WTC11 (cell line): ENCODE measurements at regions of chr12 and their contacts with region 1.

Region 1: GRCh38 chr12:54379401-54380201 is 4.9 kb downstream of the ZNF385A start:
- DNase-seq: peak; percentile 98
- ATAC-seq: peak; percentile 82
- H3K4me3 Mint-ChIP-seq: peak overlapping the region; percentile 72
- H3K27ac Mint-ChIP-seq: peak overlapping the region; percentile 88; the same call in 1 of the 2 replicates
- H3K4me1 Mint-ChIP-seq: peaks cover 24% of the 10 kb centered on the region
- H3K27me3 Mint-ChIP-seq: peaks cover 10% of the 10 kb centered on the region
- CTCF ChIP-seq: peak; percentile 98

Region 2: DNA sequence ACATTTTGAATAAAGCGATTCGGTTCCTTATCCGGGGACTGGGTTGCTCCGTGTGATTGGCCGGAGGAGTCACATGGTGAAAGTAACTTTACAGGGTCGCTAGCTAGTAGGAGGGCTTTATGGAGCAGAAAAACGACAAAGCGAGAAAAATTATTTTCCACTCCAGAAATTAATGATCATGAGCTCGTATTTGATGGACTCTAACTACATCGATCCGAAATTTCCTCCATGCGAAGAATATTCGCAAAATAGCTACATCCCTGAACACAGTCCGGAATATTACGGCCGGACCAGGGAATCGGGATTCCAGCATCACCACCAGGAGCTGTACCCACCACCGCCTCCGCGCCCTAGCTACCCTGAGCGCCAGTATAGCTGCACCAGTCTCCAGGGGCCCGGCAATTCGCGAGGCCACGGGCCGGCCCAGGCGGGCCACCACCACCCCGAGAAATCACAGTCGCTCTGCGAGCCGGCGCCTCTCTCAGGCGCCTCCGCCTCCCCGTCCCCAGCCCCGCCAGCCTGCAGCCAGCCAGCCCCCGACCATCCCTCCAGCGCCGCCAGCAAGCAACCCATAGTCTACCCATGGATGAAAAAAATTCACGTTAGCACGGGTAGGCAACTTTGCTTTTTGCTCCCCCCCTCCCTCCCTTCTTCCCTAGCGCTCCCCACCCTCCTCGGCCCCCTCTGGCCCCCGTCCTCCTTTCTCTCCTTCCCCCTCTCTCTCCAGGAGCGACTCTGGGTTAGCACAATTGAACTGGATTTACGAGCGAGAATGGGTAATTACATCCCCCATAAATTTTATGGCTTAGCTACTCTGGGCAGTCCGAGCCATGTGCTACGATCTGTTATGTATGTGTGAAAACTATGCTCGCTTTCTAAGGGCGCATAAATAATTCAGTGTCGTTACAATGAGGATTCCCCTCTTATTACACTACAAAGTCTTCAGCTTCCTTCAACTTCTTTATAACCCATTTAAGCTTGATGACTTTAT is 325.6 kb before region 1 on chr12 and contains the start of gene HOXC4:
- CTCF ChIA-PET with region 1: no interaction called
- POLR2A ChIA-PET with region 1: no interaction called
- DNase-seq: peak; percentile 38
- ATAC-seq: peak; percentile 29
- H3K4me3 Mint-ChIP-seq: peak within 1 kb of the TSS; percentile 64
- H3K27ac Mint-ChIP-seq: no peak within 1 kb of the TSS
- H3K4me1 Mint-ChIP-seq: peaks cover 63% of the 10 kb centered on the region
- H3K27me3 Mint-ChIP-seq: peaks cover 100% of the 10 kb centered on the region
- CTCF ChIP-seq: no peak
- total RNA-seq, gene HOXC4: 0.14 to 0.46 TPM (median 0.30 TPM) in 3 replicates

Region 3: GRCh38 chr12:54214553-54215406 is 164.8 kb before region 1 on chr12:
- CTCF ChIA-PET with region 1: interaction called, 31 read pairs
- POLR2A ChIA-PET with region 1: no interaction called
- DNase-seq: peak; percentile 97
- ATAC-seq: peak; percentile 71
- H3K4me3 Mint-ChIP-seq: peak overlapping the region; percentile 16; the same call in 1 of the 2 replicates
- H3K27ac Mint-ChIP-seq: no peak overlapping the region
- H3K4me1 Mint-ChIP-seq: peaks cover 33% of the 10 kb centered on the region
- H3K27me3 Mint-ChIP-seq: peaks cover 79% of the 10 kb centered on the region
- CTCF ChIP-seq: peak; percentile 96

Region 4: GRCh38 chr12:54324617-54325441 is 54.8 kb before region 1 on chr12 and contains the start of gene COPZ1:
- CTCF ChIA-PET with region 1: interaction called, 18 read pairs
- POLR2A ChIA-PET with region 1: no interaction called
- DNase-seq: peak; percentile 94
- ATAC-seq: peak; percentile 97
- H3K4me3 Mint-ChIP-seq: peak within 1 kb of the TSS; percentile 100
- H3K27ac Mint-ChIP-seq: peak within 1 kb of the TSS; percentile 98
- H3K4me1 Mint-ChIP-seq: peaks cover 24% of the 10 kb centered on the region
- H3K27me3 Mint-ChIP-seq: peaks cover 3% of the 10 kb centered on the region; the same call in 1 of the 2 replicates
- CTCF ChIP-seq: peak; percentile 84
- total RNA-seq, gene COPZ1: 98.2 to 116 TPM (median 115 TPM) in 3 replicates

Region 5: GRCh38 chr12:54359033-54359761 is 20.4 kb before region 1 on chr12:
- CTCF ChIA-PET with region 1: interaction called, 48 read pairs
- POLR2A ChIA-PET with region 1: interaction called, 6 read pairs
- DNase-seq: peak; percentile 96
- ATAC-seq: peak; percentile 77
- H3K4me3 Mint-ChIP-seq: no peak overlapping the region
- H3K27ac Mint-ChIP-seq: no peak overlapping the region
- H3K4me1 Mint-ChIP-seq: peaks cover 7% of the 10 kb centered on the region
- H3K27me3 Mint-ChIP-seq: peaks cover 8% of the 10 kb centered on the region
- CTCF ChIP-seq: no peak

Region 6: DNA sequence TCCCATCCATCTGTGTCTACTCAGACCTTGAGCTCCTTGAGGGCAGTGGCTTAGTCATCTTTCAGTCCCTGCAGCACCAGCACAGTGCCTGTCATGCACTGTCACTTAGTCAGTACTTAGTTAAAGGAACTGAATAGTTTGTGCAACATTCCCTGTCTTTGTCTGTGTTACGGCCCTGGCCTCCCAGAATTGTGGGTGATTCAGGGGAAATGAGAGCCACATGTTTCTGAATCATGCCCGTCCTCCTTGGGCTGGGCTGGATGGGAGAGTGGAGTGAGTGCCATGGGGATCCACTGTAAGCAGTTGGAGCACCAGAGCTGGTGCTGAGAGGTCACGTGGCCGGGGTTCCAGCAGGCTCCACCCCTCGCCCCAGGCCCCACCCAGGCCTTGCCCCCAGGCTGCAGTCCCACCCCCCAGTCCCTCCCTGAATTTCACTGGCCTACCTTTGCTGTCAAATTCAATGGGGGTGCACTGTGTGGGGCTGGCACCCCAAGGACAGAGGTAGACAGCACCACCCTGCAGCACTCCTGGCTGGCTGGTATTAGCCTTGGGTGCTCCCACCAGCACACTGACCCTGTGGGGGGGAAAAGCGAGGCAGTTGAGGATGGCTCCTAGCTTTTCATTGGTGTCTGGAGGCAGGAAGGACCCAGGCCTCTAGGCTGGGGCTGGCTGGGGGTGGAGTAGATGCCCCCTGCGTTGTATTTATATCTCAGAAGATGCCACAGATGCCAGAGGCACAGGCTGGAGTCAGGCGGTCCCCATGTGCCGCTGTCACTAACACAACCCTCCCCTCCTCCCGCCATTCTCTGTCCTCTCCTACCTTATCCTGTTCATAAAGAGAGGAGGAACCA is 32.0 kb after region 1 on chr12:
- CTCF ChIA-PET with region 1: interaction called, 16 read pairs
- POLR2A ChIA-PET with region 1: no interaction called
- DNase-seq: peak; percentile 59
- ATAC-seq: peak; percentile 91
- H3K4me3 Mint-ChIP-seq: no peak overlapping the region
- H3K27ac Mint-ChIP-seq: no peak overlapping the region; the same call in 1 of the 2 replicates
- H3K4me1 Mint-ChIP-seq: peaks cover 13% of the 10 kb centered on the region
- H3K27me3 Mint-ChIP-seq: peaks cover 7% of the 10 kb centered on the region
- CTCF ChIP-seq: no peak

Region 7: GRCh38 chr12:54439521-54440255 is 60.1 kb after region 1 on chr12:
- CTCF ChIA-PET with region 1: interaction called, 24 read pairs
- POLR2A ChIA-PET with region 1: no interaction called
- DNase-seq: no peak
- ATAC-seq: peak; percentile 88
- H3K4me3 Mint-ChIP-seq: no peak overlapping the region
- H3K27ac Mint-ChIP-seq: no peak overlapping the region
- H3K4me1 Mint-ChIP-seq: peaks cover 7% of the 10 kb centered on the region
- H3K27me3 Mint-ChIP-seq: peaks cover 99% of the 10 kb centered on the region
- CTCF ChIP-seq: peak; percentile 74